Vagina (tissue), 2 donors: ENCODE measurements at regions of chr1 and their contacts with region 1.

Region 1: GRCh38 chr1:162003826-162004208 is 19.9 kb downstream of the OLFML2B start:
- DNase-seq: no peak
- H3K4me3 ChIP-seq: peak overlapping the region in 1 of 2 donors; percentile 9
- H3K27ac ChIP-seq: peak overlapping the region; percentile 75
- H3K4me1 ChIP-seq: peaks cover 9% of the 10 kb centered on the region
- H3K27me3 ChIP-seq: no peaks in the 10 kb centered on the region
- CTCF ChIP-seq: no peak
- POLR2A ChIP-seq: no peak

Region 2: GRCh38 chr1:161772397-161772796 is 231.4 kb before region 1 on chr1:
- intact Hi-C with region 1: no loop called
- DNase-seq: no peak
- H3K4me3 ChIP-seq: no peak overlapping the region
- H3K27ac ChIP-seq: no peak overlapping the region
- H3K4me1 ChIP-seq: peaks cover 49% of the 10 kb centered on the region
- H3K27me3 ChIP-seq: no peaks in the 10 kb centered on the region
- CTCF ChIP-seq: no peak
- POLR2A ChIP-seq: no peak

Region 3: GRCh38 chr1:161962091-161962887 is 41.5 kb before region 1 on chr1:
- intact Hi-C with region 1: no loop called
- DNase-seq: no peak
- H3K4me3 ChIP-seq: peak overlapping the region; percentile 19 to 34
- H3K27ac ChIP-seq: peak overlapping the region; percentile 56
- H3K4me1 ChIP-seq: no peaks in the 10 kb centered on the region
- H3K27me3 ChIP-seq: no peaks in the 10 kb centered on the region
- CTCF ChIP-seq: no peak
- POLR2A ChIP-seq: no peak

Region 4: DNA sequence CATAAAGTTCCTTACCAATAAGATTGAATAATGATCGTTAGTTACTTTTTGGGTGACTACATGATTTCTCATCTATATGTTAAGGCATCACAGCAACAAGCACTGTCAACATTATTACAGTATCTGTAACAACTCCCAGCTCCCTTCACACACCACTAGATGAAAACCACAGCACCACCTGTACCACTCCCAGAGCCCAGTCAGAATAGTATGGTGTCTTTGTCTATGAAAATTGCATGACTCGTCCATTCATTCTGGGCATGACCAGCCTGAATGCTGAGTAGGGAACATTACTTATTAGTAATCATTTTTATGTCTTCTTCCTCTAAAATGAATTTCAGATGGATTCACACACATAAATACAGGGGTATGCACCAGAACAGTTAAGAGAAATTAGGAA is 12.8 kb after region 1 on chr1:
- intact Hi-C with region 1: loop called (anchors 1 kb)
- DNase-seq: no peak
- H3K4me3 ChIP-seq: no peak overlapping the region
- H3K27ac ChIP-seq: no peak overlapping the region
- H3K4me1 ChIP-seq: peaks cover 8% of the 10 kb centered on the region
- H3K27me3 ChIP-seq: no peaks in the 10 kb centered on the region
- CTCF ChIP-seq: no peak
- POLR2A ChIP-seq: no peak